PC-3 (cell line): ENCODE measurements at regions of chr1 and their contacts with region 1.

Region 1: DNA sequence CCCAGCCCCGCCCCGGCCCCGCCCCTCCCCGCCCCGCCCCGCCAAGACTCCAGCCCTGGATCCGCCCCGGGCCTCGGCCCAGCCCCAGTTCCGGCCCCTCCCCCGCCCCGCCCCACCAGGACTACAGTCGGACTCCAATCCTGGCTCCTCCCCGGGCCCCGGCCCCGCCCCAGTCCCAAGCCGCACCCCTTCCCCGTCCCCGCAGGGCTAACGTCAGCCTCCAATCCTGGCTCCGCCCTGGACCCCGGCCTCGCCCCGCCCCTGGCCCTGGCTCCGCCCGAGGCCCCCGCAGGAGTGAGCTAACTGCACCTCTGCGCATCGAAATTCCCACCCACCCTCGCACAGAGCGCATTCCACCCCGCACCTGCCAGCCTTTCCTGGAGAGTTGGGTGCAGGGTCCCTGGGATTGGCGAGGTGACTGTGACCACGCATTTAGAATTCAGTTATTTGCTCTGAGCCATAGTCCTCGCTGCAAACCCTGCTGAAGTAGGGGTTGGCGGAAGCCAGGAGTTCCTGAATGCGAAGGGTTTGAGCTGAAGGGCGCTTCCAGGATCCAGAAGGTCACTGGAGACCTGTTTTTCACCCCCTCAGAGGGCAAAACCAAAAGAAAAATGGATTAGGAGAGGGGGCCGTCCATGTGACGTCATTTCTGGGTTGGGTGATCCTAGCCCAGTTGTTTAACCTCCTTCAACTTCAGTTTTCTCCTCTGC is 588 bp upstream of the IGSF8 start:
- DNase-seq: peak; percentile 96
- ATAC-seq: peak; percentile 81
- H3K4me3 ChIP-seq: peak overlapping the region; percentile 77
- H3K27ac ChIP-seq: 0 out of 2 replicates have a peak overlapping the region, but pooled peaks have one; percentile 10
- H3K4me1 ChIP-seq: peaks cover 31% of the 10 kb centered on the region
- H3K27me3 ChIP-seq: no peaks in the 10 kb centered on the region
- CTCF ChIP-seq: no peak

Region 2: DNA sequence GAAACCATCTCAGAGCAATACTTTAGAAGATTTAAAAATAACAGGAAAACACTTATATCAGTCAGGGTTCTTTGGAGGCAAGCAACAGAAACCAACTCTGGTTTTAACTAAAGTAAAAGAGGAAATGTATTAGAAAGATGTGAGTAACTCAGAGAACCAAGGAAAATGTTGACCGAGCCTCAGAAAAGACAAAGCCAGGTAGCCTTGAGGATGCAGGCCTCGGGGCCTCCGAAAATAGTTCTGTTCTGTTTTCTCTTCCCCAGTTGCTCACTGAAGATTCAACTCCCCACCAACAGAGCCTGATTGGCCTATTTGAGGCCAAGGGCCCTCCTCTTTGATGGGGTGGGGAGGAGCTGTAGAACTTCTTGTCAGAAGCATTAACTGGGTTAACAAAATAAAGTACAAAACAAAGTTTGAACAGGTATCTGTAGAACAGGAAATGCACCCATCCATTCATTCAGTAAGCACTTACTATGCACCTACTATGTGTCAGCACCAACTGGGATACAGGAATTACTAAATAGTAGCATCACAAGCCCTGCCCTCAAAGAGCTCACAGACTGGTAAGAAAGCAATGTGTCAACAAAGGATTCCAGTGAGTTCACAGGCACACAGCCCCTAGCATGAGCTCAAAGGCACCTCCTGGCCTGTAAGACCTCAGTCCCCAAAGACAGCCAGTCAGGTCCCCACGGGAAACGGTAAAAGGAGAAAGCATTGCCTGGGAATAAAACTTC is 259.7 kb before region 1 on chr1:
- CTCF ChIA-PET with region 1: no interaction called
- POLR2A ChIA-PET with region 1: no interaction called
- intact Hi-C with region 1: no loop called
- DNase-seq: no peak
- ATAC-seq: no peak
- H3K4me3 ChIP-seq: no peak overlapping the region
- H3K27ac ChIP-seq: no peak overlapping the region
- H3K4me1 ChIP-seq: peaks cover 23% of the 10 kb centered on the region
- H3K27me3 ChIP-seq: no peaks in the 10 kb centered on the region
- CTCF ChIP-seq: no peak

Region 3: GRCh38 chr1:160163615-160164520 is 64.9 kb after region 1 on chr1:
- CTCF ChIA-PET with region 1: no interaction called
- POLR2A ChIA-PET with region 1: no interaction called
- intact Hi-C with region 1: loop called (anchors 1 kb)
- DNase-seq: peak; percentile 23
- ATAC-seq: no peak; the same call in 1 of the 2 replicates
- H3K4me3 ChIP-seq: no peak overlapping the region
- H3K27ac ChIP-seq: no peak overlapping the region
- H3K4me1 ChIP-seq: peaks cover 22% of the 10 kb centered on the region
- H3K27me3 ChIP-seq: no peaks in the 10 kb centered on the region
- CTCF ChIP-seq: peak; percentile 48

Region 4: GRCh38 chr1:160219062-160219929 is 120.3 kb after region 1 on chr1:
- CTCF ChIA-PET with region 1: interaction called, 26 read pairs
- POLR2A ChIA-PET with region 1: no interaction called
- intact Hi-C with region 1: loop called (anchors 1 kb)
- DNase-seq: peak; percentile 73
- ATAC-seq: peak; percentile 85
- H3K4me3 ChIP-seq: no peak overlapping the region
- H3K27ac ChIP-seq: no peak overlapping the region
- H3K4me1 ChIP-seq: no peaks in the 10 kb centered on the region
- H3K27me3 ChIP-seq: no peaks in the 10 kb centered on the region
- CTCF ChIP-seq: peak; percentile 83

Region 5: GRCh38 chr1:160251687-160252526 is 152.9 kb after region 1 on chr1:
- CTCF ChIA-PET with region 1: interaction called, 20 read pairs
- POLR2A ChIA-PET with region 1: no interaction called
- intact Hi-C with region 1: loop called (anchors 1 kb)
- DNase-seq: peak; percentile 86
- ATAC-seq: peak; percentile 99
- H3K4me3 ChIP-seq: no peak overlapping the region
- H3K27ac ChIP-seq: no peak overlapping the region
- H3K4me1 ChIP-seq: peaks cover 6% of the 10 kb centered on the region
- H3K27me3 ChIP-seq: no peaks in the 10 kb centered on the region
- CTCF ChIP-seq: peak; percentile 96

Region 6: DNA sequence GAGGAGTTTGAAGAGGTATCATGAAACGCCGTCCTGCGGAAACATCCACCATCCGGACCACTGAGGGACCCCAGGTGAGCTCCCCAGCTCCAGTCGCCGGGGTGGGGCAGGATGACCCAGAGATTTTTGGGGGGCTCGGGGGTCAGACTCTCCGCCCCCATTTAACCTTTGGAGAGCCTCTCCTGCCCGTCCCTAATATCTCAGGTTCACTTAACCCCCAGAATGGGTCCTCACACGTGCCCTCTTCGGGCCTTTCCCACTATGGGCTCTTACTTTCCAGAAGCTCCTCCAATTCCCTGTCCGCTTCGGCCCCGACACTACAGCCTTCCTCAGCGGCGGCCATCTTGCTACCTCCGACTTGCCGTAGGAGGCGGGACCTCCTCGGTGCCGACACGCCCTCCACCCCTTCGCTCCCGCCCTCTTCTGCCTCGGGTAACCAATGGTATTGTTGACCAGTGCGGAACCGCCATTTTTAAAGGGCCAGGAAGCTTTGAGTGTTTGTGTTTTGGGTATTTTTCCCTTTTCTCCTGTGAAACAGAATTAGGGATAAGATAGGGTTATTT is 185.9 kb after region 1 on chr1 and contains the start of gene PEX19:
- CTCF ChIA-PET with region 1: no interaction called
- POLR2A ChIA-PET with region 1: no interaction called
- intact Hi-C with region 1: loop called (anchors 2 kb)
- DNase-seq: peak; percentile 94
- ATAC-seq: peak; percentile 95
- H3K4me3 ChIP-seq: peak within 1 kb of the TSS; percentile 93
- H3K27ac ChIP-seq: peak within 1 kb of the TSS; percentile 41
- H3K4me1 ChIP-seq: peaks cover 18% of the 10 kb centered on the region
- H3K27me3 ChIP-seq: no peaks in the 10 kb centered on the region
- CTCF ChIP-seq: no peak
- total RNA-seq, gene PEX19: 63.2 and 65.4 TPM in 2 replicates

Region 7: DNA sequence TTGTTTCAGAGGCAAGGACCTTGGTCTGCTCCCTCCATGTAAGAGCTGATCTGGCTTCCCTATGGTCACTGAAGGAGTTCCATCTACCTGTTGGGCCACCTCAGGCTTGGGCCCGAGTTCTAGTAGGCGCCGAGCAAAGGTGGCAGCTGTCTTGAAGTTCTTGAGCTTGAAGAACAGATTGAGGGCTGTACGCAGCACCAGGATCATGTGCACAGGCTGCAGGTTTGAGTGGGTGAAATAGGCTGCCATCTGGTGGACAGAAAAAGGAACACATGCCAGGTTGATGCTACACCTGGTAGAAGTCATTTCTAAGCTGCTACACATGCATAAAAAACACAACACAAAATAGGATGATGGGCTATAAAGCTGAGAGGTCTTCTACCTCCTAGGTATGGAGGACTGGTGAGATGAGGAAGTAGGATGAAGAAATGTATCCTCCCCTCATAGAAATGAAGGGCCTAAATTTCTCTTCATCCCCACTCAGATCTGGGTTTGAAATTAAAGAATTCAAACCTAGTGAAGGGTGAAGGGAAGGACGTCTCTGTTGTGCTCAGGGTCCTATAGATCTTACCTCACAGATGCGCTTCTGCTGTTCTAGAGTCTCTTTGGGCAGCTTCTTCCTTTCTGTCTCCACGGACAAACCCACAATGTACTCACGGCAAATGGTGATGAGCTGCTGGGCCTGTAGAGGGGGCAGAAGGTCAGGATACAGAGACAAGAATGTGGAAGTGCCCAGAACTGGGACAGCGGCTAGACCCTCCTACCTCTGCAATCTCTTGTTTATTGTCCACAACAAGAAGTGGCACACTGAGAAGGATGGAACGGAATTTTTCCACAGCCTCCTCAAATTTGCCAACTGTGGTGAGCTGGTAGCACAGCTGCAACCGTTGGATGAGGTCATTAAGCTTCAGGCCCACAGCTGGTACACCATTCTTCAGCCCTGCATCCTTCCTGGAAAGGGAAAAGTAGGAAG is 192.5 kb after region 1 on chr1:
- CTCF ChIA-PET with region 1: interaction called, 15 read pairs
- POLR2A ChIA-PET with region 1: no interaction called
- intact Hi-C with region 1: no loop called
- DNase-seq: peak; percentile 80
- ATAC-seq: peak; percentile 87
- H3K4me3 ChIP-seq: no peak overlapping the region
- H3K27ac ChIP-seq: no peak overlapping the region
- H3K4me1 ChIP-seq: peaks cover 4% of the 10 kb centered on the region; the same call in 1 of the 2 replicates
- H3K27me3 ChIP-seq: no peaks in the 10 kb centered on the region
- CTCF ChIP-seq: peak; percentile 92

Region 8: DNA sequence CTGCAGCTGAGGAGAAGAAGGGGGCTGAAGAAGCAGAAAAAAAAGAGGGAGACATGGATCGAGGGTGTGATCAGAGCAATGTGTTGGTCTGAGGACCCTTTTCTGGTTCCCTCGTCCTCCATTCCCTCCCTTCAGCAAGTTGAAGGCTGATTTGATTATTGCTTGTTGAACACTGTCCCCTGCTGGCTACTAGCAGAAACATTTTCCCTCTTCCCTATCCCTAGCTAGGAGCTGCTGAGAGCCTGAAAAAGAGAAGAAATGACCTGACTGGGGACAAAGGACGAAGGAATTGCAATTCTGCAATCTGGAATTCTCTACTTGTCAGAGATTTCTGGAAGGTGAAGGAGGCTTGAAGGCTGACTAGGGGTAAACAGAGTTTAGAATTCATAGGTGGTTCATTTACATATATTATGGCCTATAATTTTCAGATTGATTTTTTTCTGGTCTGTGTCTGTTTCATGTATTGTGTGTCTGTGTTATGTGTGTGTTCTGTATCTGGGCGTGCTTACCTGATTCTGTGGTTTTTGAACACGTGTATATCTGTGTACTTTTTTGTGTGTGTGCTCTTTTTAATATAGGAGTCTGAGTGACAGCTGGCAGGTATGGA is 277.6 kb after region 1 on chr1:
- CTCF ChIA-PET with region 1: interaction called, 5 read pairs
- POLR2A ChIA-PET with region 1: interaction called, 3 read pairs
- intact Hi-C with region 1: loop called (anchors 1 kb)
- DNase-seq: peak; percentile 78
- ATAC-seq: peak; percentile 80
- H3K4me3 ChIP-seq: no peak overlapping the region
- H3K27ac ChIP-seq: no peak overlapping the region
- H3K4me1 ChIP-seq: peaks cover 7% of the 10 kb centered on the region; the same call in 1 of the 2 replicates
- H3K27me3 ChIP-seq: no peaks in the 10 kb centered on the region
- CTCF ChIP-seq: peak; percentile 97